Naive thymus-derived CD4-positive, alpha-beta T cell (primary cell): ENCODE measurements at regions of chr6 and their contacts with region 1.

Region 1: GRCh38 chr6:36546920-36547645 is at the start of gene STK38:
- DNase-seq: peak; percentile 79 to 93 (median 88)
- ATAC-seq: peak; percentile 90
- H3K4me3 ChIP-seq: peak within 1 kb of the TSS; percentile 98
- H3K4me3 Mint-ChIP-seq: peak within 1 kb of the TSS; percentile 96 to 99 (median 98)
- H3K27ac ChIP-seq: peak within 1 kb of the TSS; percentile 95
- H3K27ac Mint-ChIP-seq: peak within 1 kb of the TSS; percentile 89 to 99 (median 98)
- H3K4me1 ChIP-seq: peaks cover 29 to 38% of the 10 kb centered on the region in 2 donors
- H3K4me1 Mint-ChIP-seq: peaks cover 15 to 59% (median 42%) of the 10 kb centered on the region in 7 donors
- H3K27me3 ChIP-seq: no peaks in the 10 kb centered on the region
- H3K27me3 Mint-ChIP-seq: no peaks in the 10 kb centered on the region
- total RNA-seq, gene STK38: 68.5 to 193 (median 95.0) TPM

Region 2: GRCh38 chr6:35811501-35811911 is 735.6 kb before region 1 on chr6:
- CTCF ChIA-PET with region 1: no interaction called
- POLR2A ChIA-PET with region 1: no interaction called
- intact Hi-C with region 1: no loop called
- DNase-seq: no peak
- ATAC-seq: no peak
- H3K4me3 ChIP-seq: no peak overlapping the region
- H3K4me3 Mint-ChIP-seq: no peak overlapping the region
- H3K27ac ChIP-seq: no peak overlapping the region
- H3K27ac Mint-ChIP-seq: no peak overlapping the region
- H3K4me1 ChIP-seq: no peaks in the 10 kb centered on the region
- H3K4me1 Mint-ChIP-seq: peaks cover 0 to 1% (median 0%) of the 10 kb centered on the region in 7 donors
- H3K27me3 ChIP-seq: no peaks in the 10 kb centered on the region
- H3K27me3 Mint-ChIP-seq: peaks cover 2 to 19% (median 13%) of the 10 kb centered on the region in 5 donors

Region 3: GRCh38 chr6:36442671-36443470 is 104.2 kb before region 1 on chr6 and contains the starts of genes KCTD20 and PXT1:
- CTCF ChIA-PET with region 1: no interaction called
- POLR2A ChIA-PET with region 1: interaction called, 5 read pairs
- intact Hi-C with region 1: loop called (anchors 1 to 2 kb)
- DNase-seq: peak; percentile 78 to 89 (median 83)
- ATAC-seq: peak; percentile 91
- H3K4me3 ChIP-seq: peak within 1 kb of the TSS; percentile 69
- H3K4me3 Mint-ChIP-seq: peak within 1 kb of the TSS; percentile 85 to 99 (median 96)
- H3K27ac ChIP-seq: peak within 1 kb of the TSS; percentile 97
- H3K27ac Mint-ChIP-seq: peak within 1 kb of the TSS; percentile 92 to 99 (median 97)
- H3K4me1 ChIP-seq: peaks cover 20 to 31% of the 10 kb centered on the region in 2 donors
- H3K4me1 Mint-ChIP-seq: peaks cover 28 to 56% (median 50%) of the 10 kb centered on the region in 7 donors
- H3K27me3 ChIP-seq: no peaks in the 10 kb centered on the region
- H3K27me3 Mint-ChIP-seq: no peaks in the 10 kb centered on the region
- total RNA-seq, gene KCTD20: 33.0 to 55.8 (median 33.2) TPM
- total RNA-seq, gene PXT1: 0.15 to 0.64 (median 0.32) TPM

Region 4: DNA sequence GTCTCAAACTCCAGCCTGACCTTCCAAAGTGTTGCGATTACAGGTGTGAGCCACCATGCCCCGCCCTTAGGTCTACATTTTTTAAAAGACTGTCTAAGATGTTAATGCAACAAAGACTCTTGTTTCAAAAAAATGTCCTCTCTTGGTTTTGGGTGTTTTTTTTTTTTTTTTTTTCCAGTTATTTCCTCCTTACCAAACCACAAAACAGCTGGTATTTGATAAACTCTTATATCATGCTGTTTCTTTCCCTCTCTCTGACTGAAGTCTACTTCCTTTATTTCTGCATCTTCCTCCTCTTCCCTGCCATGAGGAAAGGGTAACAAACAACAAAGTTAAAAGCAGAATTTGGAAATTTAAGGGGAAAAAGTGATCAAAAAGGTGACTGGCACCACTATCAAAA is 21.0 kb before region 1 on chr6:
- CTCF ChIA-PET with region 1: no interaction called
- POLR2A ChIA-PET with region 1: interaction called, 4 read pairs
- intact Hi-C with region 1: loop called in 1 of 2 experiments (anchors 2 kb)
- DNase-seq: no peak
- ATAC-seq: no peak
- H3K4me3 ChIP-seq: no peak overlapping the region
- H3K4me3 Mint-ChIP-seq: peak overlapping the region in 8 of 10 donors; percentile 3 to 66 (median 52)
- H3K27ac ChIP-seq: no peak overlapping the region
- H3K27ac Mint-ChIP-seq: peak overlapping the region in 7 of 9 donors; percentile 18 to 61 (median 45)
- H3K4me1 ChIP-seq: peaks cover 3 to 23% of the 10 kb centered on the region in 2 donors
- H3K4me1 Mint-ChIP-seq: peaks cover 29 to 76% (median 56%) of the 10 kb centered on the region in 7 donors
- H3K27me3 ChIP-seq: no peaks in the 10 kb centered on the region
- H3K27me3 Mint-ChIP-seq: no peaks in the 10 kb centered on the region

Region 5: DNA sequence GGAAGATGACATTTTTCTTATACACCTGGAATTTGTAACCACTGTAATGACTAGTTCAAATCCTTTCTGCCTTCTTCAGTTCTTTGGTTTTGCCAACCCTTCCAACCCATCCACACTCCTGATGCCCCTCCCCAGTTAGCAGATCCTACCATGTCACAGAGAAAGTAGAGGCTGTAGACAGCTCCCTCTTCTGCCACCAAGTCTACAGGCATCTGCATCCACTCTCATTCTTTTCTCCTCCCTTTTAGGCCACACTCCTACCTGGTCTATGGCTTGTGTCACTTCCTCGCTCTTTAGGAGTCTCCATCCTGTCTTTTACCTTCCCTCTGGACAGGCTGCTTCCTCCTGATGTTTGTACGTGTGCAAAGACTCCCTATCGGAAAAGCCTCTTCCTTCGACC is 13.7 kb after region 1 on chr6:
- CTCF ChIA-PET with region 1: no interaction called
- POLR2A ChIA-PET with region 1: interaction called, 4 read pairs
- intact Hi-C with region 1: loop called in 1 of 2 experiments (anchors 2 kb)
- DNase-seq: no peak
- ATAC-seq: no peak
- H3K4me3 ChIP-seq: no peak overlapping the region
- H3K4me3 Mint-ChIP-seq: no peak overlapping the region
- H3K27ac ChIP-seq: no peak overlapping the region
- H3K27ac Mint-ChIP-seq: peak overlapping the region in 1 of 9 donors; percentile 16
- H3K4me1 ChIP-seq: no peaks in the 10 kb centered on the region
- H3K4me1 Mint-ChIP-seq: peaks cover 0 to 8% (median 0%) of the 10 kb centered on the region in 7 donors
- H3K27me3 ChIP-seq: no peaks in the 10 kb centered on the region
- H3K27me3 Mint-ChIP-seq: peaks cover 0 to 34% (median 0%) of the 10 kb centered on the region in 5 donors

Region 6: GRCh38 chr6:37566111-37566949 is 1019.2 kb after region 1 on chr6:
- CTCF ChIA-PET with region 1: no interaction called
- POLR2A ChIA-PET with region 1: no interaction called
- intact Hi-C with region 1: no loop called
- DNase-seq: peak; percentile 45 to 86 (median 70)
- ATAC-seq: peak; percentile 93
- H3K4me3 ChIP-seq: peak overlapping the region; percentile 52
- H3K4me3 Mint-ChIP-seq: peak overlapping the region in 9 of 10 donors; percentile 37 to 80 (median 63)
- H3K27ac ChIP-seq: no peak overlapping the region
- H3K27ac Mint-ChIP-seq: peak overlapping the region in 2 of 9 donors; percentile 8 to 12
- H3K4me1 ChIP-seq: peaks cover 0 to 4% of the 10 kb centered on the region in 2 donors
- H3K4me1 Mint-ChIP-seq: peaks cover 6 to 21% (median 12%) of the 10 kb centered on the region in 7 donors
- H3K27me3 ChIP-seq: no peaks in the 10 kb centered on the region
- H3K27me3 Mint-ChIP-seq: peaks cover 3 to 28% (median 11%) of the 10 kb centered on the region in 5 donors